OCI-LY7 (cell line): ENCODE measurements at regions of chr17 and their contacts with region 1.

Region 1: DNA sequence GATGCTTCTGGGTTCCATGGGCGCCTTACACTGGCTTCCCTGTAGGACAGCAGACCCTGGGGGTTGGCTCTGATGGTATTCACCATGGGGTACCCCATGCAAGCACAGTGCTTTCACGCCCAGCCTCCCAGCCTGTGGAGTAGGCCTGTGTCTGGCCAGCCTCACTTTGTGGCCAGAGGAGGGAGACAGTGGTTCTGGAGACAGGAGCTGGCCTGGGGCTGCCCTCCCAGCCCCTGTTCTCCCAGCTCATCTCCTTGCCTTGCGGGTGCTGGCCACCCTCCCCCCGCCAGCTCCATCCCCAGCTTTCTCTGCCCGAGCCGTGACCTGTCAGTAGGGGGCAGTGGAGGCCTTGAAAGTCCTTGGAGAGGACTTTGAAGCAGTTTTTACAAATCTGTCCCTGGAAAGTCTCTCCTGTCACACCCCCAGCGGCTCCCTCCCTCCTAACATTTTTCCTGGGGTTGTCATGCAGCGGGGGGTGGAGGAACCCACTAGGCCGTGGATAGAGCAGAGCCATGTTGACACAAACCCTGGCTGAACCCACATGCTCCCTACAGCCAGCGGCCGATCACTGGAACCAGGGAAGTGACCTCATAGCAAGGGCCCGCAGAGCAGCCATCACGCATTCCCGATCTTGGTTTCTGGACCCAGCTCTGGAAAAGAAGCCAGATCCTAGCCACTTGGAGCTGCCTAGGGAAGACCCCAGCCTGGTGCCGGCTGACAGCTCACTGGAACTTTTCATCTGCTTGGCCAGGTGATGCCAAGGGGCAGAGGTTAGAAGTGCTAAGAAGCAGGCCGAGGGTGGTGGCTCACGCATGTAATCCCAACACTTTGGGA is 289.4 kb downstream of the SEC14L1 start:
- DNase-seq: peak; percentile 89
- H3K4me3 ChIP-seq: peak overlapping the region; percentile 15
- H3K27ac ChIP-seq: peak overlapping the region; percentile 65
- H3K4me1 ChIP-seq: peaks cover 100% of the 10 kb centered on the region
- CTCF ChIP-seq: peak; percentile 99

Region 2: DNA sequence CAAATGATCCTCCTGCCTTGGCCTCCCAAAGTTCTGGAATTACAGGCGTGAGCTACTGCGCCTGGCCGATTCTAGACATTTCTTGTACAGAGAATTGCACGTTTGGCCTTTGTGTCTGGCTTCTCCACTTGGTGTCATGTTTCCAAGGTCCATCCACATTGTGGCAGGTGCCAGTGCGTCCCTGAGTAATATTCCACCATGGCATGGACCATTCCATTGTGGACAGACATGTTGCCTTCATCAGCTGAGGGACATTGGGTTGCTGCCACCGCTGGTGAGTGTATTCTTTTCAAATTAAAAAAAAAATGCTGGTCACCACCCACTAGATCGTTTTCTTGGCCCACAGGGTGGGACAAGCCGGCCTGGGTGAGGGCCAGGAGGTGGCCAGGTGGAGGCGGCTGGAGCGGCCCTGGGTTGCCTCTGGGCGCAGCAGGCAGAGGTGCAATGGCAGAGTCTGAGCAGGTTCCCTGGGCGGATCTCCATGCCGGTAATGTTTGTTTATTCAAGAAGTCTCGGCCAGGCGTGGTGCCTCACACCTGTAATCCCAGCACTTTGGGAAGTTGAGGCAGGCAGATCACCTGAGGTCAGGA is 15.2 kb before region 1 on chr17:
- CTCF ChIA-PET with region 1: interaction called, 9 read pairs
- POLR2A ChIA-PET with region 1: interaction called, 11 read pairs
- intact Hi-C with region 1: no loop called
- DNase-seq: no peak
- H3K4me3 ChIP-seq: no peak overlapping the region
- H3K27ac ChIP-seq: no peak overlapping the region
- H3K4me1 ChIP-seq: peaks cover 57% of the 10 kb centered on the region
- CTCF ChIP-seq: no peak